ENCODE measurements at regions of chr19 and their contacts with region 1.

Region 1: DNA sequence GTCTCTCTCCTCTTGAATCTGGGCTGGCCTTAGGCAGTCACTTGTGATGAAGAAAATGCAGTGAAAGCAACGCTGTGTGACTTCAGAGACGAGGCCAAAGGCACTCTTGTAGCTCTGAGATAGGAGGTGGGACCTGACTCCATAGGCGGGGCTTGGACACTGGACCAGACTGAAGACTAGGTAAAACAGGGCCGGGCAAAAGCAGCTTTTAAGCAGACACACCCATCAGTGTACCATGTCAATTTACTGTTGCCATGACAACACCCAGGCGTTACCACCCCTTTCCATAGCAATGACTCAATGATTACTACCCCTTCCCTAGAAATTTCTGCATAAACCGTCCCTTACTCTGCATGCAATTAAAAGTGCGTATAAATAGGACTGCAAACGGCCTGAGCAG is 6.6 kb upstream of the EID2 start:
- DNase-seq: no peak
- ATAC-seq: no peak; the same call in 1 of the 2 replicates
- H3K4me3 ChIP-seq: no peak overlapping the region
- H3K27ac ChIP-seq: no peak overlapping the region
- H3K4me1 ChIP-seq: peaks cover 6% of the 10 kb centered on the region
- H3K27me3 ChIP-seq: peaks cover 20% of the 10 kb centered on the region
- CTCF ChIP-seq: no peak

Region 2: DNA sequence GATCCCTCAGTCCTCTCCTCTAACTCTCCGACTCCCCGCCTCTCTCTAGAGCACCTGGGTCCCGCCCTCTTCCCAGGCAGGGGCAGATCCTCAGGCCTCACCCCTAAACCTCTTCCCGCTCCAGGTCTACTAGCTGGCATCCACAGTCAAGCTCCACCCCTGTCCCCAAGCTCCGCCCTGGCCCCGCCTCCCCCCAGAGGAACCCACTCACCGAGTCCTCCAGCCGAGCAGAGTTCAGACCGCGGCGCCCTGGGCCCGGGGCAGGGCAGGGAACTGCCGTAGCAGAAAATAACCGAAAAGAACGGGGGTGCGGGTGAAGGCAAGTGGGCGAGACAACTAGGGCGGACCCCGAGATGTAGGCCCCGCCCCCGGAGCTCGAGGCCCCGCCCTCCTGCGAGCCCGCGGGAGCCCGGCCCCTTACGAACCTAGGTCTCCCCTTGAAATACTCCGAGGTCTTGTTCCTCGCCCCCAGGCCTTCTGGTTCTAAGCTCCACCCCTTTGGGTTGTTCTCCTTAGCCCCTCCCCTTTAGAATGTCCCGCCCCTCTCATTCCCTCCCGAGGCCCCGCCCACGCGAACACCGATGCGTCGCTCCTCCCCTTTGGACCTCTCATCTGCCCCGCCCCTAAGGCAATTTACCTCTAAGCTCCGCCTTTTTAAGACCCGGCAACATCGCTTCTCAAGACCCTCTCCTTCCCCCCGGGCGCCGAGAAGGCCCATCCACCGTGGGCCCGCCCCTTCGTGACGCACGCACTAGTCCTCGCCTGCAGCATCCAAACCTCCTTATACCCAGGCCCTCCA is 1158.8 kb before region 1 on chr19 and contains the start of gene GGN:
- CTCF ChIA-PET with region 1: no interaction called
- POLR2A ChIA-PET with region 1: no interaction called
- in situ Hi-C with region 1: no loop called
- intact Hi-C with region 1: no loop called
- DNase-seq: peak; percentile 94
- ATAC-seq: peak; percentile 83
- H3K4me3 ChIP-seq: peak within 1 kb of the TSS; percentile 55 to 93
- H3K27ac ChIP-seq: peak within 1 kb of the TSS; percentile 76
- H3K4me1 ChIP-seq: peaks cover 11% of the 10 kb centered on the region
- H3K27me3 ChIP-seq: no peaks in the 10 kb centered on the region
- CTCF ChIP-seq: no peak
- total RNA-seq, gene GGN: 1.4 TPM

Region 3: GRCh38 chr19:39296055-39296645 is 250.4 kb before region 1 on chr19 and contains the start of gene IFNL1:
- CTCF ChIA-PET with region 1: no interaction called
- POLR2A ChIA-PET with region 1: no interaction called
- in situ Hi-C with region 1: no loop called
- intact Hi-C with region 1: no loop called
- DNase-seq: no peak
- ATAC-seq: peak; percentile 19
- H3K4me3 ChIP-seq: no peak within 1 kb of the TSS
- H3K27ac ChIP-seq: no peak within 1 kb of the TSS
- H3K4me1 ChIP-seq: no peaks in the 10 kb centered on the region; the same call in 1 of the 2 replicates
- H3K27me3 ChIP-seq: peaks cover 14% of the 10 kb centered on the region
- CTCF ChIP-seq: no peak
- total RNA-seq, gene IFNL1: 0.57 TPM

Region 4: DNA sequence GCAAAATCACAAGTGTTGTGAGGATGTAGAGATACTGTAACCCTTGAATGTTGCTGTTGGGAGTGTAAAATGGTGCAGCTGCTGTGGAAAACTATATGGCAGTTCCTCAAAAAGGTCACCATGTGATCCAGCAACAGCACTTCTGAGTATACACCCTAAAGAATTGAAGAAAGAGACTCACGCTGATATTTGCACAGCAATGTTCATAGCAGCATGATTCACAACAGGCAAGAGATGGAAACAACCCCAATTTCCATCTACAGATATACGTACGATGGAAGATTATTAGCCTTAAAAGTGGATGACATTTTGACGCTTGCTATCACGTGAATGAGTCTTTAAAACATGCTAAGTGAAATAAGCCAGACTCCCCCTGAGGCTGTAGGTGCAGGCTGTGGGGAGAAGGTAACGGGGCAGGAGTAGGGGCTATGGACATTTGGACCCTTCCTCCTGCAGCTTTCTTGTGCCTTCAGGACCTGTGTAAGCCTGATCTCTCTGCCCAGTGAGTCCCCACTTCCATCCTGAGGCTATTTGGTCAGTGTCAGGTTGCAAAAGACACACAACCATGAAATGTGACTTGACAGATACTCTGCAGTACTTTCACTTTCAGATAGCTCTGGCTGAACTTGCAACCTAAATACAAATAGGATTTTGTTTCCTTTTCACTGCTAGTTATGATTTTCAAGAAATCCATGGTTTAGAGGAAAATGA is 11.0 kb after region 1 on chr19:
- CTCF ChIA-PET with region 1: interaction called, 31 read pairs
- POLR2A ChIA-PET with region 1: interaction called, 6 read pairs
- in situ Hi-C with region 1: no loop called
- intact Hi-C with region 1: no loop called
- DNase-seq: peak; percentile 91
- ATAC-seq: peak; percentile 82
- H3K4me3 ChIP-seq: peak overlapping the region; percentile 0 to 36; a peak in 3 of 4 replicates
- H3K27ac ChIP-seq: peak overlapping the region; percentile 0; the same call in 1 of the 2 replicates
- H3K4me1 ChIP-seq: peaks cover 17% of the 10 kb centered on the region
- H3K27me3 ChIP-seq: peaks cover 43% of the 10 kb centered on the region
- CTCF ChIP-seq: no peak

Region 5: GRCh38 chr19:39599116-39599515 is 52.5 kb after region 1 on chr19:
- CTCF ChIA-PET with region 1: interaction called, 11 read pairs
- POLR2A ChIA-PET with region 1: interaction called, 6 read pairs
- in situ Hi-C with region 1: no loop called
- intact Hi-C with region 1: no loop called
- DNase-seq: no peak
- ATAC-seq: no peak
- H3K4me3 ChIP-seq: no peak overlapping the region
- H3K27ac ChIP-seq: no peak overlapping the region
- H3K4me1 ChIP-seq: no peaks in the 10 kb centered on the region
- H3K27me3 ChIP-seq: peaks cover 88% of the 10 kb centered on the region
- CTCF ChIP-seq: 0 out of 2 replicates have a peak, but pooled peaks have one; percentile 1

Region 6: DNA sequence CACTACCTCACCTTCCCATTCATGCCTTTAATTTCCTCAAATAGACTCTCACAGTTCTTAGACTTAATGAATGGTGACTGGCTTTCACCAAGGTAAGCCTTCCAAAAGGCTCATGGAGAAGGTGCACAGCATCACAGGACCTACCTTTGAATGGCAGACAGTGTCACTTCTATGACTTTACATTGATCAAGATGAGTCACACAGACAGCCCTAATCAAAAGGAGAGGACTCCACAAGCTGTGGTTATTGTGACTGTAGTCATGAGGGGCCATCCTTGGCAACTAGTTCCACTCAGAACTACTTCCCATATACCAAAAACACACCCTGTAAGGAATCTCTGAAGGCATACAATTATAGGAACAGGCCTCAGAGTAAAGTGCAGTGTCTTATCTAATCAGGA is 115.0 kb after region 1 on chr19:
- CTCF ChIA-PET with region 1: interaction called, 21 read pairs
- POLR2A ChIA-PET with region 1: no interaction called
- in situ Hi-C with region 1: no loop called
- intact Hi-C with region 1: no loop called
- DNase-seq: no peak
- ATAC-seq: no peak
- H3K4me3 ChIP-seq: no peak overlapping the region
- H3K27ac ChIP-seq: no peak overlapping the region
- H3K4me1 ChIP-seq: no peaks in the 10 kb centered on the region
- H3K27me3 ChIP-seq: peaks cover 71% of the 10 kb centered on the region
- CTCF ChIP-seq: 0 out of 2 replicates have a peak, but pooled peaks have one; percentile 19

Region 7: DNA sequence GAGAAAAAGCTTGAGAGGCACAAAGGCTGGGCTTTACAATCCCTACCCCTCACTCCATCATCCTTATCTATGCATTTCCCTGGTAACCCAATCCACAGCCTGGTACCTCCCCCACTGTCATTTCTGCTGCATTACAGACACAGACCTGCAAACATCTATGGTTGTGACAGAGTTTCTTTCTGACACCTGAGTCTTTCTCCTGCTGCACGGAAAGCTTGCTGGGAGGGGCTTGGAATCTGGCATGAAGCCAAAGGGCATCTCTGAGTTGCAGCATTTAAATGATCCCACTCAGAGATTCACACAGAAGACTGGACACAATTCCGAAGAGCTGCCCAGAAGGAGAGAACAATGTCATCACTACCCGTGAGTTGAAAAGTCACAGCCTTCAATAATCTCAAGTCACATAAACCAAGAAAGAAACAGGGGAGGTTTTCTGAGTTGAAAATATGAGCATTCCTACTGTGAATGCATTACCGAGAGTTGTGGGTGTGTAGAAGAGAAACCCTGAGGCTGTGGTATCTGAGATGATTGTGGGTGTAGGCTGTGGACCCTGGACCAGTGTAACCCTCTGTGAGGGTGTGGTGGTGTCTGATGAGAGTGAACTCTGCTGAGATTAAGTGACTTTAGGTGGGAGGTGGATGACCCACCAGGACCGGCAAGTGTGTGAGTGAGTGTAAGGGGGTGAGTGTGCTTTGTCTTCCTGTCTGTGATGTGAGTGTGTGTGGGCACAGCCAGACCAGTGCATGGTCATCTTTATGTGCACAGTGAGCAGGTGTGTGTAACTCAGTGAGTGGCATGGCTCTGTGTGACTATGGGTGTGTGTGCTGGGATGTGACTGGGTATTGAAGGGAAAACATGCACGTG is 157.8 kb after region 1 on chr19 and contains the start of gene LGALS14:
- CTCF ChIA-PET with region 1: interaction called, 10 read pairs
- POLR2A ChIA-PET with region 1: no interaction called
- in situ Hi-C with region 1: no loop called
- intact Hi-C with region 1: no loop called
- DNase-seq: no peak
- ATAC-seq: peak; percentile 52
- H3K4me3 ChIP-seq: no peak within 1 kb of the TSS
- H3K27ac ChIP-seq: no peak within 1 kb of the TSS
- H3K4me1 ChIP-seq: no peaks in the 10 kb centered on the region
- H3K27me3 ChIP-seq: peaks cover 78% of the 10 kb centered on the region
- CTCF ChIP-seq: no peak
- total RNA-seq, gene LGALS14: not detected

Region 8: DNA sequence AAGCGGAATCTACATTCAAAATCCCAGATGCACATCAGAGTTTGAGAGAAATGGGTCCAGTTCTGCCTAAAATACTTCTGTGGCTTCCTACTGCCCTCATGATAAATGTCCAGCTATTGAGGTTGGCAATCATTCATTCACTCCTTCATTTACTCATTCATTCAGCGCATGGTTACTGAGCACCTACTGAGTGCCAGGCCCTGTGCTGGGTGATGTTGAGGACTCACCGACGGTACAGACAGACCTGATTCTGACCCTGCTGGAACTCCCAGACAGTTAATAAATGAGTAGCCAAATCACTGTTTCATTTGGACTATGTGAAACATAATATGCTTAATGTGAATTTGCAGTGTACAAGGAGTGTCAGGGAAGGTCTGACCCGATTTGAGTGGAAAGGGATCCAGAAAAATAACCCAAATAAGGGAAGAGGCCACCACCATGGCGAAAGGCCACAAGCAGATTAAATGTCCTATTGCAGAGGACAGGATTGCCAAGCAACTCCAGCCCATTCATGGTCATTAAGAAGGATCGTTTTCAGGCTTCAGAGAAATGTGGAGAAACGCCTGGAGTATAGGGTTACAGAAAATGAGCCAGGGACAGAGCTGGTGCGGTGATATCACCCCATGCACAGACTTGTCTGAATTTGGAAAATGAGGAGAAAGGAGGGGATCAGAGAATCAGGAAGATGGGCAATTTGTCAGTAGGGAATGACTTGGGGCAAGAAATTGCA is 266.8 kb after region 1 on chr19:
- CTCF ChIA-PET with region 1: interaction called, 16 read pairs
- POLR2A ChIA-PET with region 1: no interaction called
- in situ Hi-C with region 1: no loop called
- intact Hi-C with region 1: no loop called
- DNase-seq: no peak
- ATAC-seq: peak; percentile 5; the same call in 1 of the 2 replicates
- H3K4me3 ChIP-seq: no peak overlapping the region
- H3K27ac ChIP-seq: no peak overlapping the region
- H3K4me1 ChIP-seq: no peaks in the 10 kb centered on the region
- H3K27me3 ChIP-seq: no peaks in the 10 kb centered on the region
- CTCF ChIP-seq: no peak

Measured in Panc1 (cell line).